Activated T-helper 1 cell treated with anti-CD3 and anti-CD28 coated beads, Interleukin-12 subunit alpha, Interleukin-12 subunit beta, Interleukin-2, Interleukin-4 antibody, amounts not matched to agents 30 ng/mL and 10 ng/mL and 1 ng/mL, durations not matched to agents 14 hours and 24 hours and 36 hours (primary cell): ENCODE measurements at regions of chr5 and their contacts with region 1.

Region 1: DNA sequence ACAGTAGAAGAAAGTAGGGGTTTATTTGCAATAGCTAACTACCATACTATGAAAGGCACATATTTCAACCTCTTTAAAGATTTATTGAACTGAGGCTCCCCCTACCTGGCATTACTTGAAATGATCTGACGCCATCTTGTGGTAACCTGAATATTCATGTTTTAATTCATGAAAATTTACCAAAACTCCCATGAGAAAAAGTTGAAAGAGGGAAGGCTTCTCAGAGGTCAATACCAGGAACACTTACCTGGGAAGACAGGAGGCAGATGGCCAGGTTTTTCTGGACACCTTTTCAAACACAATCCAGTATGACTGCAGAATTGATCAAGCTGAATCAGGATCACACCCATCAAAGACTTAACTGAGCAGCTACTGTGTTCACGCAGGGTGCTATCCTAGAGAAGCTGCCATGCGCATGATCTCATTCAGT is 9.4 kb downstream of the PRELID2 start:
- DNase-seq: no peak
- H3K4me3 Mint-ChIP-seq: no peak overlapping the region
- H3K27ac Mint-ChIP-seq: no peak overlapping the region
- H3K4me1 Mint-ChIP-seq: no peaks in the 10 kb centered on the region
- H3K27me3 Mint-ChIP-seq: peaks cover 2% of the 10 kb centered on the region

Region 2: DNA sequence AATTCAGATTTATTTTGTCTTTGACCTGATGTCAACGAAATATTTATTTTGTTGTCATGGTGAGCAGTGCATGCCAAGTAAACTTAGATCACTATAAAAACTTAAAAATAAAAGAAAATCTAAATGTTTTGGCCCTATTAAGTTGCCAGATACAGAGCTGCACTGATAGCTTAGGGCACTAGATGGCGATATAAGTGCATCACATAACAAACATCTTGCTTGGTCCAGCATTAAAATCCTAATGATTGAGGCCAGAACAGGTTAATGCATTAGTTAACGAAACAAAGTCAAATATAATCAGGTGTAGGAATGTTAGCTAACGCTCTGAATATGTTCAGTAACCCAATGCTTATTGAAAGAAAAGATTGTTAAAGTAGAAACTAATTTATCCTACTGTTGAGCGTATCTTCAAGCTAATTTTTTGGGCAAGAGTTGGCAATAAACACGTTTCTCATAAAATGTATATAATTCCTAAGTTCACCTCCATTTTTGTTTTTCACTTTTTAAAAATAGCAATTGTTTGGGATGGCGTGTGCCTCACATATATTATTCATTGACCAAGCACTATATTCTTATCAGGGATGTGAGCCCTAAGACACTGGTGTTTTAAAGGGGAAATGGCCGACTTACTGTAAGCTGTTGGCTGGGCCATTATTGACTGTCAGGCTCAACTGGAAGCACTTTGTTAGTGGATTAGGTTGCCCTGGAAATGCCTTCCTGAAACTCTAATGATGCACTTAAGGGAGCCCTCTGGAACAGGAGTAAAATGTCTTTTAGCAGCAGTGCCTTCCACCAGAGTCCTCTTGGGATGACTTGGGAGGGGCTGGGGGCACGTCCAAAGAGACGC is 1621.8 kb before region 1 on chr5:
- intact Hi-C with region 1: loop called (anchors 1 kb)
- DNase-seq: no peak
- H3K4me3 Mint-ChIP-seq: no peak overlapping the region
- H3K27ac Mint-ChIP-seq: no peak overlapping the region
- H3K4me1 Mint-ChIP-seq: no peaks in the 10 kb centered on the region
- H3K27me3 Mint-ChIP-seq: peaks cover 48% of the 10 kb centered on the region

Region 3: DNA sequence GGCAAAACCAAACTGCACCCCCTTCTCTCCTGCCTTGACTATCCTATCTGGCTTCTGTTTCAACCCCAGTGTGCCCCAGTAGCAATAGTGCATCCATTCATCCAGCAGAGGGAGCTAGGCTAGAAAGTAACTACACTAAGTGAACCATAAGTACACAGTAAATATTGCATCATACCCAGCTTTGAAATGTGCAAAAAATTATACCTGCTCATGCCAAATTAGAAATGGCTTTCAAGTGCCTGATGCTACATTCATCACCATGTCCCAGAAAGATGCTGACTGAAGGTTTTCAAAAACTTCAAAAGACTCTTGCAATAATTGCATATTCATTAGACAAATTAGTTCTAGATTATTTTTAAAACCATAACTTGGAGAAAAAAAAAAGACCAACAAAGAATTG is 144.1 kb before region 1 on chr5:
- intact Hi-C with region 1: loop called (anchors 1 kb)
- DNase-seq: peak; percentile 2
- H3K4me3 Mint-ChIP-seq: no peak overlapping the region
- H3K27ac Mint-ChIP-seq: no peak overlapping the region
- H3K4me1 Mint-ChIP-seq: no peaks in the 10 kb centered on the region
- H3K27me3 Mint-ChIP-seq: peaks cover 2% of the 10 kb centered on the region

Region 4: GRCh38 chr5:145697251-145697990 is 128.3 kb before region 1 on chr5:
- intact Hi-C with region 1: loop called (anchors 1 kb)
- DNase-seq: no peak
- H3K4me3 Mint-ChIP-seq: no peak overlapping the region
- H3K27ac Mint-ChIP-seq: no peak overlapping the region
- H3K4me1 Mint-ChIP-seq: no peaks in the 10 kb centered on the region
- H3K27me3 Mint-ChIP-seq: no peaks in the 10 kb centered on the region

Region 5: DNA sequence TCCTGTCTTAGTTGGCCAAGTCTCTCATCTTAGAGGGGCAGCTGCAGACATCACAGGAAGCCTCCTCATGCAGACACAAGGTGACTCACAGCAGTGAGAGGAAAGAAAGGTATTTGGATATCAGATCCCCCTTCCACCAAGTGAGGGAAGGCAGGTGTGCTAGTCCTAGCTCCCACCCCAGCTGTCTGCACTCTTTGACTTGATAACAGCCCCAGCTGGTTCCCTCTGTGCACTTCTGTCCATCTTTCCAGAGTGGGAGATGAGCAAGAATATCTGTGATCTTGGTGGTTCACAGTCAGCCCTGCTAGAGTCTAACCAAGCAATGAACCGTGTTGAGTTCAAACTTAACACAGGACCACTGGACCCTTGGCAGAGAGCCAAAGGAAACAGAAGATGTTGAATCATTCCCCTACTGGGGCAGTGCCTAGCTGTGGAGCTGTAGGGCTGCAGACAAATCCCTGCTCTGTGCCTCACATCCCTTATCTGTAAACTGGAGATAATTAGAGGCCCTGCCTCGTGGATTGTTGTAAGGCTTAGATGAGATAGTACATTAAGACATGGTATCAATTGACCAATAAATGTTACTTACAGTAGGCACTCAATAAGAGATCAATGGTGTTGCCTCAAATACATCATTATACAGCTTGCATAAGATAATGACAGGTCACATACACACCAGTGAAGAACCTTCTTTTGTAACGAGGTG is 149.7 kb after region 1 on chr5:
- intact Hi-C with region 1: loop called (anchors 5 kb)
- DNase-seq: no peak
- H3K4me3 Mint-ChIP-seq: no peak overlapping the region
- H3K27ac Mint-ChIP-seq: no peak overlapping the region
- H3K4me1 Mint-ChIP-seq: no peaks in the 10 kb centered on the region
- H3K27me3 Mint-ChIP-seq: peaks cover 2% of the 10 kb centered on the region

Region 6: GRCh38 chr5:146049014-146049703 is 223.4 kb after region 1 on chr5:
- intact Hi-C with region 1: loop called (anchors 1 kb)
- DNase-seq: no peak
- H3K4me3 Mint-ChIP-seq: no peak overlapping the region
- H3K27ac Mint-ChIP-seq: no peak overlapping the region
- H3K4me1 Mint-ChIP-seq: no peaks in the 10 kb centered on the region
- H3K27me3 Mint-ChIP-seq: peaks cover 18% of the 10 kb centered on the region